ENCODE measurements at regions of chr7 and their contacts with region 1.

Region 1: GRCh38 chr7:102272075-102272917 is 14.4 kb upstream of the SH2B2 start:
- DNase-seq: peak; percentile 95
- H3K4me3 ChIP-seq: no peak overlapping the region; a peak in 1 of 4 replicates
- H3K27ac ChIP-seq: no peak overlapping the region
- H3K4me1 ChIP-seq: peaks cover 0 to 22% of the 10 kb centered on the region in 2 experiments; a peak in 1 of 4 replicates
- H3K27me3 ChIP-seq: no peaks in the 10 kb centered on the region
- CTCF ChIP-seq: peak; percentile 100
- EP300 ChIP-seq: no peak
- RAD21 ChIP-seq: peak; percentile 99

Region 2: DNA sequence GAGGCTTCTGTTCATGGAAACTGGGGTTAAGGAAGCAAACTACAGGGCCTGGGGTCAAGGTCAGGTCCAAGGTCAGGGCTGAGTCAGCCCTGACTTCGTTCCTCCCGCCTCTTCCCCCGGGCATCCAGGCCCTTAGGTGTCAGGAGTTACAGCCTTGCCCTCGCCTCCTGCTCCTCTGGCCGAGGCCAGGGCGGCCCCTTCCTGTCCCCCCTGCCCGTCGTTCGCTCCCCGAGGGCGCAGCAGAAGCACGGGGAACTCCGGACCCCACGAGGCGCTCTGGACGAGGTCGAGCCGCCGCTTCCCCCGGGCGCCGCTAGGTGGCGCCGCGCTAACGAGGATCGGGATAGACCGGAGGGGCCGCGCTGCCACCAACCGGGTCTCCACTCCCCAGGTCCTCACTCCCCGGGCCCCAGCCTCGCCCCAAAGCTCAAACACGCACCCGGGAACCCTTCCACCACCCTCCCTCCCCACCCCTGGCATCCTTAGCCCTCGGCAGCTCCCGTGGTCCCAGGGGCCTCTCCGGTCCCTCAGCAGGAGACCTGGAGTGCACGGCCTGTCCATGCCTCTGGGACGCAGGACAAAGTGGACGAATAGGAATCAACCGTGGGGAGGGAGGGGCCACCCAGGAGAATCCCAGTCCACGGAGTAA is 584.0 kb before region 1 on chr7:
- CTCF ChIA-PET with region 1: interaction called, 12 read pairs
- POLR2A ChIA-PET with region 1: no interaction called
- DNase-seq: peak; percentile 98
- H3K4me3 ChIP-seq: peak overlapping the region; percentile 14 to 53; a peak in 3 of 4 replicates
- H3K27ac ChIP-seq: no peak overlapping the region
- H3K4me1 ChIP-seq: peaks cover 0 to 6% of the 10 kb centered on the region in 2 experiments; a peak in 1 of 4 replicates
- H3K27me3 ChIP-seq: no peaks in the 10 kb centered on the region
- CTCF ChIP-seq: peak; percentile 95
- EP300 ChIP-seq: no peak
- RAD21 ChIP-seq: peak; percentile 92

Region 3: DNA sequence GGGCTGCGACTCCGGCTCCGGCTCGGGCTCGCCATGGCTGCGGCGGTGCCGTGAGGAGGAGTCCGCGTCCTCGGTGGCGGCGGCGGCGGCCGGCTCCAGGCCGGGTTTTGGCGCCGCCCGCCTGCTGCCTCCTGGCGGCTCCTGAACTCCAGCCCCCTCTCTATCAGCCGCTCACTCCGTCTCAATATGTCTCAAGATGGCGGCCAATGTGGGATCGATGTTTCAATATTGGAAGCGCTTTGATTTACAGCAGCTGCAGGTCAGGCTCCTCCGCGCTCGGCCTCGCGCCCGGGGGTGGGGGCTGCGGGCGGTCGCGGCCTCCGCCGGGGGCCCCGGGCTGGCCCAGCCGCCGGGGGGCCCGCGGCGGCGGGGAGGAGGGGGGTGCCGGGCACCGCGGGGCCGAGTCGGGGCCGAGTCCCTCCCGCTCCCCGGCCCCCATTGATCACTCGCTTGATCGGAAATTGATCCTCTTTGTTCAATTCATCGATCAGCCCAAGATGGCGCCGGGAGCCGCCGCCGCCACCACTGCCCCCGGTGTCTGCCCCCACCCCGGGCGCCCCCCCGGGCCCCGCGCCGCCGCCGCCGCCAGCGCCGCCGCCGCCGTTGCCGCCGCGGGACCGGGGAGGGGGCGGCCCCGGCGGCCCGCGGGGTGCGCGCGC is 456.3 kb before region 1 on chr7:
- CTCF ChIA-PET with region 1: interaction called, 30 read pairs
- POLR2A ChIA-PET with region 1: no interaction called
- DNase-seq: peak; percentile 97
- H3K4me3 ChIP-seq: peak overlapping the region; percentile 53 to 97
- H3K27ac ChIP-seq: peak overlapping the region in 1 of 2 experiments; percentile 94; a peak in 2 of 4 replicates
- H3K4me1 ChIP-seq: peaks cover 18 to 42% of the 10 kb centered on the region in 2 experiments; a peak in 3 of 4 replicates
- H3K27me3 ChIP-seq: no peaks in the 10 kb centered on the region
- CTCF ChIP-seq: no peak
- EP300 ChIP-seq: peak in 1 of 2 experiments; percentile 60; a peak in 1 of 4 replicates
- RAD21 ChIP-seq: peak; percentile 25; the same call in 1 of the 2 replicates

Region 4: DNA sequence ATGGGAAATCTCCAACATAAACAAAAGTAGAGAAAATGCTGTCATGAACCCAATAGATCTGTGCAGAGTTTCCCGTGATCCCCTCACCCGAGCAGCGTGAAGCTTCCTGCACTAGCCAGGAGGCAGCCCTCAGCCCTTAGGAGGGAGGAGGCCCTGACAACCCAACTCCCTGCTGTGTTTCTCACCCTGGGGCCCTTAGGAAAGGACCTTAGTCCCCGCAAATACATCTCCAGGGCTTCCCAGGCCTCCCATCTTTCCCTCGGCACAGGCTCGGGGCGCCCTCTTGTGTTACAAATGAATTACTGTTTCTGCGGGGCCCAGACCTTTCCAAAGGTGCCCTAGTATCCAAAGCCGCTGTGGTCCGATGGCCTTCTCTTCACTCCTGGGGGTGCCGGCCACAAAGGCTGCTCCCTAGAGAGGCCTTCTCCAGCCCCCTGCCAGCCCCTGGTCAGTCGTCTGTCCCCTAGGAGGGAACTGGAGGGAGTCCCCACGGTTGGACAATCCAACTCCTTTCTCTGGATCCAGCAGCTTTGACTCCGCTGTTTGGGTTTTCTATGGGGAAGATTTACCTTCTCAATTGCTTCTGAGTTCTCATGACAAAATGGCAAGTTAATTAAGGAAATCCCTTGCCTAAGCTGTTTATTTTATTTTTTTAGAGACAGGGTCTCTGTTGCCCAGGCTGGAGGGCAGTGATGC is 35.6 kb before region 1 on chr7:
- CTCF ChIA-PET with region 1: interaction called, 68 read pairs
- POLR2A ChIA-PET with region 1: no interaction called
- DNase-seq: peak; percentile 95
- H3K4me3 ChIP-seq: no peak overlapping the region
- H3K27ac ChIP-seq: no peak overlapping the region; a peak in 1 of 4 replicates
- H3K4me1 ChIP-seq: peaks cover 0 to 2% of the 10 kb centered on the region in 2 experiments; a peak in 1 of 4 replicates
- H3K27me3 ChIP-seq: no peaks in the 10 kb centered on the region
- CTCF ChIP-seq: peak; percentile 97
- EP300 ChIP-seq: no peak
- RAD21 ChIP-seq: peak; percentile 99

Region 5: GRCh38 chr7:102260856-102261255 is 11.4 kb before region 1 on chr7:
- CTCF ChIA-PET with region 1: interaction called, 85 read pairs
- POLR2A ChIA-PET with region 1: interaction called, 5 read pairs
- DNase-seq: peak; percentile 96
- H3K4me3 ChIP-seq: no peak overlapping the region
- H3K27ac ChIP-seq: peak overlapping the region in 1 of 2 experiments; percentile 72; a peak in 2 of 4 replicates
- H3K4me1 ChIP-seq: peaks cover 0 to 19% of the 10 kb centered on the region in 2 experiments; a peak in 1 of 4 replicates
- H3K27me3 ChIP-seq: no peaks in the 10 kb centered on the region
- CTCF ChIP-seq: no peak
- EP300 ChIP-seq: no peak
- RAD21 ChIP-seq: peak; percentile 1; the same call in 1 of the 2 replicates

Region 6: DNA sequence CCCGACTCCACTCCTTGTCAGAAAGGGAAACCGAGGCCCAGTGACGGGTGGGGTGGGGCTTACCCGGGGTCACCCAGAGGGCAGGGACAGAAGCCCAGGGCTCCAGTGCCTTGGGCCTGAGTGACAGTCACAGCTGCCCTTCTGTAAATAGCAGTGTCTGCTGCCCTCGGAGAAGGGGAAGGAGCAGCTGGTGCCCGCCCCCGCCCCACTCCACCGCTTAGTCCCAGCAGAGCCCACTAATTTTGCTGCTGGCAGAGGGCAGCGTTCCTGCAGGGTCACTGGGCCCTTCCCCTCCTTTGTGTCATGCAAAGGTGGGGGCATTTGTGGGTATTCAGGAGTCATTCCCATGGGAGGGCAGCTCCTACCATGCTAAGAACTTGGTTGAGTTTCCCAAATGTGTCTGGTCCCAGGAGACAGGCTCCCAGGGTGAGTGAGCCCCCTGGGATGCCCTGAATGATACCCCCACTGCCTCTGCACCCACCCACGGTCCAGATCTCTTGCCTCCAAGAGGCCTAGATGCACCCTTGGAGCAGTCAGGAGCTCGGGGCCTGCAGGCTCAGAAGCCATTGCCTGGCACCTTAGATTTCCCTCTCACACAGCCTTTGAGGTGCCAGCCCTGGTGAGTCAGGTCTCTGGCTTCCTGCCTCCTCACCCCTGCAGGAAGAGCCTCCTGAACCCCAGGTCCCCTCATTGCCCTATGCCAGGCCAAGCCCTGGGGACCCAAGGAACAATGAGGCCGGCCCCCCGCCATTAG is 31.6 kb after region 1 on chr7:
- CTCF ChIA-PET with region 1: no interaction called
- POLR2A ChIA-PET with region 1: no interaction called
- DNase-seq: no peak
- H3K4me3 ChIP-seq: no peak overlapping the region
- H3K27ac ChIP-seq: no peak overlapping the region; a peak in 1 of 4 replicates
- H3K4me1 ChIP-seq: peaks cover 0 to 5% of the 10 kb centered on the region in 2 experiments; a peak in 1 of 4 replicates
- H3K27me3 ChIP-seq: no peaks in the 10 kb centered on the region
- CTCF ChIP-seq: no peak
- EP300 ChIP-seq: no peak
- RAD21 ChIP-seq: no peak

Region 7: DNA sequence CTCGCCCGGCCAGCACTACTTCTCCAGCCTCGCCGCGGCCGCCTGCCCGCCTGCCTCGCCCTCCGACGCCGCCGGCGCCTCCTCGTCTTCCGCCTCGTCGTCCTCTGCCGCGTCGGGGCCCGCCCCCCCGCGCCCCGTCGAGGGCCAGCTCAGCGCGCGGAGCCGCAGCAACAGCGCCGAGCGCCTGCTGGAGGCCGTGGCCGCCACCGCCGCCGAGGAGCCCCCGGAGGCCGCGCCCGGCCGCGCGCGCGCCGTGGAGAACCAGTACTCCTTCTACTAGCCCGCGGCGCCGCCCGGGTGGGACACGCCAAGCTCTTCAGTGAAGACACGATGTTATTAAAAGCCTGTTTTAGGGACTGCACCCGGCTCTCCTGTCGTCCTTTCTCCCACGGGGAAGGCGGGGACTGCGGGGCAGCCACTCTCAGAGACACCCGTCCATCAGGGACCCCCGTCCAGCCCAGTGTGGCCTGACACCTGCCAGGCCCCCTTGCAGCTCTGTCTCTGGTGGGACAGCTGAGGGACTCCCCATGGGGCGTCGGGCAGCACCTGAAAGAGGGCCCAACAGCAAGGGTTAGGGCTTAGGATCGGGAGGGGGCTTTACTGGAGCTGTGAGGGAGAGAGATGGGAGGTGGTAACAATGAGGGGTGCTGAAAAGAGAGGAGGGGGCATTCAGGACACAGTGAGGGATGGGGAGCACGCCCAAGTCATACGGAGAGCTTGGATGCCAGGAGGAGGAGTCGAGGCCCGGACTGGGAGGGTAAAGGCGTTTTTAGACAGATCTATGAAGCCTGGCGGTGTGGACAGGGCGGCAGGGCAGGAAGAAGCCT is 49.3 kb after region 1 on chr7:
- CTCF ChIA-PET with region 1: no interaction called
- POLR2A ChIA-PET with region 1: no interaction called
- DNase-seq: peak; percentile 46
- H3K4me3 ChIP-seq: no peak overlapping the region
- H3K27ac ChIP-seq: no peak overlapping the region
- H3K4me1 ChIP-seq: peaks cover 0 to 4% of the 10 kb centered on the region in 2 experiments; a peak in 1 of 4 replicates
- H3K27me3 ChIP-seq: no peaks in the 10 kb centered on the region
- CTCF ChIP-seq: no peak
- EP300 ChIP-seq: no peak
- RAD21 ChIP-seq: no peak

Region 8: DNA sequence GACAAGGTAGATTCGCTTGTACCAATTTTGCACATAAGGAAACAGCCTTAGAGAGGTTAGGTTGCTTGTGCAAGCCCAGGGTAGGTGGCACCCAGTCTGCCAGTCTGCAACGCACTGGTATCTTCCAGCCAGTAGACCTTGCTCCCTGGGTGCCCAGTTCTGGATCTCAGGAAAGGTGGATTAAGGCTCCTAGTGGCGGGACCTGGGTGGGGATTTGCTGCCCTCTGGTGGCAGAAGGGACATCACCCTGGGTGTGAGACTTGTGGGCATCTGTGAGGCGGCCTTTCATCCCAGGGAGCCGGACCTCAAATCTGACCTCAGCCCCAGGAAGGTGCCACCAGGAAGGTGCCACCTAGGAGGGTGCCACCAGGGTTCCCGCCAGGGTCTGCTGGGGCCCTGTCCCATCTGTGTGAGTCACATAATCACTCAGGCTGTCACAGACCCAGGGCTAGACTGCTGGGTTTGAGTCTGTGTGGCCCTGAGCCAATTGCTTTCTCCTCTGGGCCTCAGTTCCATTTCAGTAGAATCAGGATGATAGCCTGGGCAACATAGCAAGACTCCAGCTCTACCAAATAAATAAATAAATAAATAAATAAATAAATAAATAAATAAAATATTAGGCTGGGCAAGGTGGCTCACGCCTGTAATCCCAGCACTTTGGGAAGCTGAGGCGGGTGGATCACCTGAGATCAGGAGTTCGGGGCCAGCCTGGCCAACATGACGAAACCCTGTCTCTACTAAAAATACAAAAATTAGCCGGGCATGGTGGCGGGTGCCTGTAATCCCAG is 118.6 kb after region 1 on chr7:
- CTCF ChIA-PET with region 1: interaction called, 421 read pairs
- POLR2A ChIA-PET with region 1: no interaction called
- DNase-seq: peak; percentile 91
- H3K4me3 ChIP-seq: no peak overlapping the region
- H3K27ac ChIP-seq: no peak overlapping the region
- H3K4me1 ChIP-seq: peaks cover 0 to 2% of the 10 kb centered on the region in 2 experiments; a peak in 1 of 4 replicates
- H3K27me3 ChIP-seq: no peaks in the 10 kb centered on the region
- CTCF ChIP-seq: peak; percentile 99
- EP300 ChIP-seq: no peak
- RAD21 ChIP-seq: peak; percentile 99

Measured in SK-N-SH (cell line).